Heart left ventricle (tissue), 16 donors: ENCODE measurements at regions of chr3 and their contacts with region 1.

Region 1: GRCh38 chr3:57783186-57784088 is 27.3 kb downstream of the SLMAP start:
- DNase-seq: peak in 3 of 5 donors; percentile 22 to 53 (median 39)
- ATAC-seq: peak; percentile 68 to 90 (median 70)
- H3K4me3 ChIP-seq: no peak overlapping the region
- H3K27ac ChIP-seq: peak overlapping the region in 1 of 12 donors; percentile 33
- H3K4me1 ChIP-seq: peaks cover 0 to 47% (median 27%) of the 10 kb centered on the region in 12 donors
- H3K27me3 ChIP-seq: no peaks in the 10 kb centered on the region
- CTCF ChIP-seq: no peak
- POLR2A ChIP-seq: no peak

Region 2: GRCh38 chr3:57820479-57820878 is 37.0 kb after region 1 on chr3:
- intact Hi-C with region 1: loop called in 1 of 10 experiments (anchors 5 kb)
- DNase-seq: no peak
- ATAC-seq: no peak
- H3K4me3 ChIP-seq: no peak overlapping the region
- H3K27ac ChIP-seq: no peak overlapping the region
- H3K4me1 ChIP-seq: peaks cover 0 to 44% (median 17%) of the 10 kb centered on the region in 12 donors
- H3K27me3 ChIP-seq: no peaks in the 10 kb centered on the region
- CTCF ChIP-seq: no peak
- POLR2A ChIP-seq: no peak

Region 3: DNA sequence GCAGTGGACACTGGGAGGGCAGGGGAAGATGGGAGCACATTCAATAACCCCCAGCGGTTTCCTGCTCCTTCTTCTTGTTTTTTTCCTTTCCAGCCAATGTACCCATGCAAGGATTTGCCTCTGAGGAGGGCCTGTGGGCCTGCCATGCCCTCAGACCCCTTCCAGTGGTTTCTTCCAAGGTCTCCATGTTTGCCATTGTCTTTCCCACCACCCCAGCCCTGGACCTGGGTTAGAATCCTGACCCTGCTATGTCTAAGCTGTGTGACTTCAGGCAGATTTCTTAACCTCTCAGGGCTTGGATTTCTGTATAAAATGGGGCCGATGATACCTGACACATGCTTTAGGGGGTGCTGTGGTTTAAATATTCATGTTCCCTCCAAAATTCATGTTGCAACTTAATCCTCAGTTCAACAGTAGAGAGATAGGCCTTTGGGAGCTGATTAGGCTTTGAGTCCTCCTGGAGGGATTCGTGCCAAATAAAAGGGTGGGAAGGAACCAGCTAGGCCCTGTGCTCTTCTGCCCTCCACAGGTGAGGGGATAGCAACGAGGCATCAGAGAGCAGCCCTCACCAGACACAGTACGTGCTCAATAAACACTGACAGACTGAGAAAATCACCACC is 178.5 kb after region 1 on chr3:
- intact Hi-C with region 1: no loop called
- DNase-seq: no peak
- ATAC-seq: no peak
- H3K4me3 ChIP-seq: no peak overlapping the region
- H3K27ac ChIP-seq: no peak overlapping the region
- H3K4me1 ChIP-seq: peaks cover 0 to 34% (median 22%) of the 10 kb centered on the region in 12 donors
- H3K27me3 ChIP-seq: no peaks in the 10 kb centered on the region
- CTCF ChIP-seq: peak in 6 of 12 donors; percentile 15 to 39 (median 30)
- POLR2A ChIP-seq: no peak

Region 4: DNA sequence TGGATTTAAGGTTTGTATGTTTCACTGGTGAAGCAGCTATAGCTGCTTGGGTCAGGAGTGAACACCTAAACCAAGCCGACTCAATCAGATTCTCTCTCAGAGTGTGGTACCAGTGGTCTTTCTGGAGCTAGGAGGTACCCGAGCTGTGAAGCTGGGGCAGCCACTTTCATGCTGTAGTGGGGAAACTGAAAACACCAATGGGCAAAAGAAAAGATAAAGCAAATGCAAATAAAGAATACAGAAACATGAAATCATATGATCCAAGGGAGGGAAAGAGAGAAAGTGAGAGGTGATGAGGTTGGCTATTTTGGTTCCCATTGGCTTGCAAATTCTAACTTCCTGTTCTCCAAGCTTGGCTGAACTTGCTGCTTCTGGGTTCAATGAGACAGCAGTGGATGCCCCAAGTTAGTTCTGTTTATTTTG is 1478.7 kb after region 1 on chr3:
- intact Hi-C with region 1: no loop called
- DNase-seq: no peak
- ATAC-seq: no peak
- H3K4me3 ChIP-seq: no peak overlapping the region
- H3K27ac ChIP-seq: no peak overlapping the region
- H3K4me1 ChIP-seq: peaks cover 0 to 16% (median 0%) of the 10 kb centered on the region in 12 donors
- H3K27me3 ChIP-seq: no peaks in the 10 kb centered on the region
- CTCF ChIP-seq: no peak
- POLR2A ChIP-seq: no peak